Right cardiac atrium (tissue), 5 donors: ENCODE measurements at regions of chr2 and their contacts with region 1.

Region 1: DNA sequence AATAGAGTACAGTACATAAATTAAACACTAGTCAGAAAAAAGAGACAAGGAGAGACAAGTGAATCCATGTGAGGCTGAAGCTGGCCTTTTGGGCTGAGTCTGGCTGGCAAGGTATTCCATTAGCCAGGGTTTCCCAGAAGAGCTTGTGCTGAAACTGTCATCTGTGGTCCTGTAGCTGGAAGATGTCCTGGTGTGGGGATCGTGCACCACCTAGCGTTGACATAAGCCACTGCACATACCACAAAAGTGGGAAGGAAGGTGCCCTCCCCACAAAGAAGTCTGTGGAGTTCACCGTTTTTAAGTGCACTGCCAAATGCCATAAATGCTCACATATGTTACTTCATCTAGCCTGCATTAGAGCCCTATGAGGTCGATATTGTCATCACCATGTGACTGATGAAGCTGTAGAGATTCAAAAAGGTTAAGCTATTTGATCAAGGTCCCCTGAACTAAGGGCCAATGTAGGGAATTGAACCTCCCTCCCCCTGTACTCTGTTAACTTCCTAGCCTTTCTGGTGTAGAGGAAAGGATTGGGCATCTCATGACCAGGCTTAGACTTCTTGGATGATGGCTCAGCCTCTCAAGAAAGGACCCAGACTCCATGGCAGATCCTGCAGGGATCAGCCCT is 31.9 kb upstream of the GALNT14 start:
- DNase-seq: peak in 2 of 3 donors; percentile 47 to 62
- ATAC-seq: peak; percentile 75 to 85
- H3K4me3 ChIP-seq: no peak overlapping the region
- H3K27ac ChIP-seq: no peak overlapping the region
- H3K4me1 ChIP-seq: no peaks in the 10 kb centered on the region
- H3K27me3 ChIP-seq: no peaks in the 10 kb centered on the region

Region 2: DNA sequence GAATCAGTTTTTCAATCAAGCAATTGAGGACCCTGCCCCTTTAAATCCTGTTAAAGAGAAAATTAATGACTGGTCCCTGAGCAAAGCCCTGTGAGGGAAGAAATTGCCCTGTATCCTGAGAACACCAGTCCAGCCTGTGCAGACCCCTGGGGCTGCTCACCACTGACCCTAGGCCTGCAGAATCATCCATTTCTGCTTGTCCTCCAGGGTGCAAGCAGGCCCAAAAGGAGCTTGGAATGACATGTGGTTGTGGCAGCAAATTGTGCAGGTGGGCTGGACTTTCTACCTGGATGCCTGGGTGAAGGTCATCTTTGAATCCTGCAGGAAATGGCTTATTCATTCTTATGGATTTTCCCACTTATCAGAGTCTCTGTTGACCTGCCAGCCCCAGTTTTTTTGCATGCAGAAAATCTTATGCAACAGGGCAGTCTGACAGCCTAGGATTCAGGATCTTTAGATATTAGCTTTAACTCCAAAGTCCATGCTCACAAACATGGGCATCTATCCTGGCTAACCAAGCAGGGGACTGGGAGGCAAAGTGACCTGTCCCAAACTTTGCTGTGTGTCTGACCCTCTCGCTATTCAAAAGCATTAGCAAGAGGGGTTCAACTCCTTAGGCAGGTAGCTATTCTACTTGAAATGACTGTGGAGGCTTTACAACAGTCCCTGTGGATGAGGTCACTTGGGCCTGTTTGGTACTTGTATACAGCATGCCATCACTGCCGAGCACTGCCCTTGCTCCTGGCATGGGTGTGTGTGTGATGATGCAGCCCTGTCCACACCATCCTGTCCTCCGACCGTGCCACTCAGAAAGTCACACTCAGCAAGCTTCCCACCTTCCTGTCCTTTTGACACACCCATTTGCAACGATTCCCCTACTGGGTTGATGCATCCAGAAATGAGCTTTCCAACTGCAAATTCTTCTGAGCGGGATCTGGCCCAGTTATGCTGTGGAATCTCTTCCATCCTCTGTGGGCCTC is 448.2 kb before region 1 on chr2:
- intact Hi-C with region 1: loop called in 3 of 4 experiments (anchors 2 to 10 kb)
- DNase-seq: no peak
- ATAC-seq: no peak
- H3K4me3 ChIP-seq: no peak overlapping the region
- H3K27ac ChIP-seq: no peak overlapping the region
- H3K4me1 ChIP-seq: no peaks in the 10 kb centered on the region
- H3K27me3 ChIP-seq: peaks cover 2% of the 10 kb centered on the region

Region 3: GRCh38 chr2:31270136-31270535 is 100.0 kb after region 1 on chr2:
- intact Hi-C with region 1: no loop called
- DNase-seq: no peak
- ATAC-seq: no peak
- H3K4me3 ChIP-seq: no peak overlapping the region
- H3K27ac ChIP-seq: no peak overlapping the region
- H3K4me1 ChIP-seq: no peaks in the 10 kb centered on the region
- H3K27me3 ChIP-seq: no peaks in the 10 kb centered on the region

Region 4: DNA sequence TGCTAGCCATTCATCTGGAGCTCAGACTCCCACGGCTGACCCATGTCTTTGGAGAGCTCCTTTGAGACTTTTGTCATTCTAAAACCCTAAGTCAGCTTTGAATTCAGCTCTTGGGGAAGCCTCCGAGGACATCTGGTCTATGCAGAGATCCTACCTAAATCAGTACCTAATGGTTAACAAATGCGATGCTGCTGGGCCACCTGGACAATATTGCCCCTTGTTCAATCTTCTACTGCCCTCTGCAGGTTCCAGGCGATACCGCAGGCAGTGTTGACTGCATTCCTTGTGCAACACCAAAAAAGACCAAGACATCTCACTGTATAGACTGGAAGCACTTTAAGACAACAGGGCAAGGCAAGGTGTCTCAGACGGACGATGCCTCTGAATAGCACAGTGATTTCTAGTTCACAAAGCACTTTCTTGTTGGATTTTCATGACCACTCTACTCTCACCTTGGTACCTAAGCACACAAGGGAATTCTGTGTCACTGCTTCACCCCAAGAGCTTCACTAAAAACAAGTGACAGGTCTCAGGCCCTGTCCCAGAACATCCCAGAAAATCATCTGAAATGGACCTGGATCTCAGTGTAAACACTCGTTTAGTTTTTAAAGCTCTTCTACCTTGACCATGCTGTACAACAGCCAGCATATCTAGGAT is 163.5 kb after region 1 on chr2:
- intact Hi-C with region 1: loop called (anchors 10 kb)
- DNase-seq: peak; percentile 68 to 89 (median 82)
- ATAC-seq: peak; percentile 65 to 80
- H3K4me3 ChIP-seq: no peak overlapping the region
- H3K27ac ChIP-seq: no peak overlapping the region
- H3K4me1 ChIP-seq: no peaks in the 10 kb centered on the region
- H3K27me3 ChIP-seq: no peaks in the 10 kb centered on the region